ENCODE measurements at regions of chr12 and their contacts with region 1.

Region 1: GRCh38 chr12:51823875-51824565 is 24.5 kb downstream of the FIGNL2 start:
- DNase-seq: peak in 1 of 2 experiments; percentile 73
- H3K4me3 ChIP-seq: no peak overlapping the region
- H3K4me3 Mint-ChIP-seq: no peak overlapping the region
- H3K27ac Mint-ChIP-seq: no peak overlapping the region
- H3K4me1 ChIP-seq: 0 out of 2 replicates have a peak, but pooled peaks cover 4% of the 10 kb centered on the region
- H3K4me1 Mint-ChIP-seq: no peaks in the 10 kb centered on the region
- H3K27me3 ChIP-seq: no peaks in the 10 kb centered on the region
- H3K27me3 Mint-ChIP-seq: no peaks in the 10 kb centered on the region
- CTCF ChIP-seq: peak; percentile 66 to 67

Region 2: GRCh38 chr12:51836041-51836826 is 12.2 kb after region 1 on chr12:
- CTCF ChIA-PET with region 1: interaction called, 11 read pairs
- POLR2A ChIA-PET with region 1: no interaction called
- intact Hi-C with region 1: no loop called
- DNase-seq: no peak
- H3K4me3 ChIP-seq: no peak overlapping the region
- H3K4me3 Mint-ChIP-seq: no peak overlapping the region
- H3K27ac Mint-ChIP-seq: no peak overlapping the region
- H3K4me1 ChIP-seq: peaks cover 18% of the 10 kb centered on the region
- H3K4me1 Mint-ChIP-seq: peaks cover 17% of the 10 kb centered on the region
- H3K27me3 ChIP-seq: no peaks in the 10 kb centered on the region
- H3K27me3 Mint-ChIP-seq: peaks cover 4% of the 10 kb centered on the region
- CTCF ChIP-seq: no peak

Region 3: DNA sequence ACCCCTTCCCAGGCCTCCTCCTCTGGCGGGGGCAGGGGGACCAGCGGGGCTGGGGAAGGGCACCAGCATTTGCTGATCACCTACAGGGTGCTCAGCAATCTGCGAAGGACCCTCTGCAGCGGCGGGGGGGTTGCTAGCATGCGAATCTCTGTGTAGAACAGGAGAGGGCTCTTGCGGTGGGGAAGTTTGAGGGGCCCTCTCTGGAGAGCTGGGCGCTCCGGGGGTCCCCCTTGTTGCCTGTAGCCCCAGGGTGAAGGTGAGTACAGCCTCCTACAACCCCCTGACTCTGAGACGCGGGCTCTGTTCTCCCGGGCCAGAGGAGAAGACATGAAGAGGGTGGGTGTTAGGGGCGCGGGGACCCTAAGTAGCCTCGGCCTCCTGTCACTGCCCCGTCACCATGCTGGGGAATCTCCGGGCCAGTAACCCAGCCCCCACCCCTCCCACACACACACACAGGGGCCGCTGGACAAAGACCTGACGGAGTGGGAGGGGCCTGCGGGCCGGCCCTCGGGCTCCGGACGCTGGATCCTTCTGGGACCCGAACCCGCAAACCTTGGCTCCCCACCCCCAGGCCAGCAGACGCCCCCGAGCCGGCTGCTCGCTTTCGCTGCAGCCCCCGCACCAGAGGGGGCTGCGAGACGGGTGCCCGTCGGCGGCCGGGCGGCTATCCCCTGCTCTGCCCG is 23.8 kb after region 1 on chr12:
- CTCF ChIA-PET with region 1: interaction called, 4 read pairs
- POLR2A ChIA-PET with region 1: no interaction called
- intact Hi-C with region 1: loop called (anchors 2 kb)
- DNase-seq: peak; percentile 57 to 65
- H3K4me3 ChIP-seq: peak overlapping the region; percentile 83
- H3K4me3 Mint-ChIP-seq: peak overlapping the region; percentile 84
- H3K27ac Mint-ChIP-seq: peak overlapping the region; percentile 46
- H3K4me1 ChIP-seq: peaks cover 27% of the 10 kb centered on the region
- H3K4me1 Mint-ChIP-seq: peaks cover 17% of the 10 kb centered on the region
- H3K27me3 ChIP-seq: no peaks in the 10 kb centered on the region
- H3K27me3 Mint-ChIP-seq: no peaks in the 10 kb centered on the region
- CTCF ChIP-seq: no peak

Region 4: GRCh38 chr12:51863933-51864832 is 40.2 kb after region 1 on chr12:
- CTCF ChIA-PET with region 1: interaction called, 21 read pairs
- POLR2A ChIA-PET with region 1: no interaction called
- intact Hi-C with region 1: no loop called
- DNase-seq: peak; percentile 88 to 91
- H3K4me3 ChIP-seq: peak overlapping the region; percentile 50
- H3K4me3 Mint-ChIP-seq: peak overlapping the region; percentile 68
- H3K27ac Mint-ChIP-seq: peak overlapping the region; percentile 75
- H3K4me1 ChIP-seq: peaks cover 36% of the 10 kb centered on the region
- H3K4me1 Mint-ChIP-seq: peaks cover 22% of the 10 kb centered on the region
- H3K27me3 ChIP-seq: no peaks in the 10 kb centered on the region
- H3K27me3 Mint-ChIP-seq: no peaks in the 10 kb centered on the region
- CTCF ChIP-seq: no peak

Region 5: DNA sequence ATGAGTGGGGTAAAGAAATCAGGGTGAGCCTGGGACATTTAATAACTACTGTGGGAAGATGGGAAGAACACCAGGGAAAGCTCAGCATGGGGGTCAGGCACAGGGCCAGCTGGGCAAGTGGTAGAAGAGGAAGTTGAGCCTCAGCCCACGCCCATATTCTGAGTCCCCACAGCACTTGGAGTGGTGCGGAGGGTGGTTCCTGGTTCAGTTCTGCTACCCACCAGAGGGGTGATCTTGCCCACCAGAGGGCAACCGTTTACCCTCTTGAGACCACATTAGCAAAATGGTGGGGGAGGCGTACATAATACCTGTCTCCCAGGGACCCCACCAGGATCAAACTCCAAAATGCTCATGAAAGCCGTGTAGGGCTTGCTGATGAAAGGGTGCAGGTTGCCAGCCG is 47.1 kb after region 1 on chr12:
- CTCF ChIA-PET with region 1: interaction called, 27 read pairs
- POLR2A ChIA-PET with region 1: no interaction called
- intact Hi-C with region 1: loop called (anchors 1 kb)
- DNase-seq: no peak
- H3K4me3 ChIP-seq: no peak overlapping the region
- H3K4me3 Mint-ChIP-seq: no peak overlapping the region
- H3K27ac Mint-ChIP-seq: no peak overlapping the region
- H3K4me1 ChIP-seq: peaks cover 16% of the 10 kb centered on the region
- H3K4me1 Mint-ChIP-seq: peaks cover 29% of the 10 kb centered on the region
- H3K27me3 ChIP-seq: no peaks in the 10 kb centered on the region
- H3K27me3 Mint-ChIP-seq: no peaks in the 10 kb centered on the region
- CTCF ChIP-seq: no peak